BJ (cell line): ENCODE measurements at regions of chr9 and their contacts with region 1.

Region 1: DNA sequence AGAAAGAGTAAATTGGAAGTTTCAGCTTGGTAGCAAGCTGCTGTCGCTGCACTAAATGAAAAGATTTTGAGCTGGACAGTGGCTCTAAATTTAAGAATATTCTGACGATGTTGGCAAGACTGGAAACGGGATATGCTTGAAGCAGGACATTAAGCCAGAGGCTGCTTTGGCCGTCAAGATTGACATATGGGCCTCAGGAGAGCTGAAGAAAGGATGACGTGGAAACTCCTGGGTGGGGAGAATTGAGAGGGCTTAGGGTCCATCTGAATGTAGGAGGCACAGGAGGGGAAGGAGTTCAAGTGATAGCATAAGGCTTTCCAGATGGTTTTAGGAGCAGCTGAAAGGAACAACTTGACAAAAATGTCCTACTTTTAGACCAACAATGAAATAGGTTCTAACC is 108.9 kb downstream of the PAPPA start:
- DNase-seq: no peak
- H3K4me3 ChIP-seq: no peak overlapping the region
- H3K27me3 ChIP-seq: no peaks in the 10 kb centered on the region
- CTCF ChIP-seq: no peak

Region 2: DNA sequence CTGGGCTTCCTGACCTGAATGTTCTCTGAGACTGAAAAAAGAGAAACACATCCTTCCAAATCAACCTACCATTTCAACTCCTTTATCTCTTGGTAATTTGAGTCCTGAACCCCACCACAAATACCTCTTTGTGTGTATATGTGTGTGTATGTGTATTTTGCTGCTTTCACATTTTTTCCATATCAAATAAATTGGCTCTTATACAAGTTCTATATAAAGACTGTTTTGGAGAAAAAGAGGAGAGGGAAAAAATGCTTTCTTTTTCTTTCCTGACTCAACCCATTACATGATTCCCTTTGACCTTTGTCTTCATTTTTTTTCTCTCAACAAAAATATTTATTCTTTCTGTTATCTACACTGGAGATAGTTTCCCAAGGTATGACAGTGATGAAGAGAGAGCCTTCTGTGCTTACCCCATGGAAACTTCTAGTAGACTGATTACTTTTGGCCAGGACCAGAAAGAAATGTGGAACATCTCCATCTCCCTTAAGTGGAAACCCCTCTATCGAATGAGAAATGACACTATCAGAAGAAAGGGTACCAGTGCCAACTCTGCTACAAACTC is 23.6 kb before region 1 on chr9:
- CTCF ChIA-PET with region 1: no interaction called
- POLR2A ChIA-PET with region 1: no interaction called
- DNase-seq: no peak
- H3K4me3 ChIP-seq: no peak overlapping the region
- H3K27me3 ChIP-seq: no peaks in the 10 kb centered on the region
- CTCF ChIP-seq: no peak

Region 3: GRCh38 chr9:116250891-116251290 is 11.6 kb before region 1 on chr9:
- CTCF ChIA-PET with region 1: interaction called, 12 read pairs
- POLR2A ChIA-PET with region 1: no interaction called
- DNase-seq: no peak
- H3K4me3 ChIP-seq: no peak overlapping the region
- H3K27me3 ChIP-seq: no peaks in the 10 kb centered on the region
- CTCF ChIP-seq: no peak

Region 4: DNA sequence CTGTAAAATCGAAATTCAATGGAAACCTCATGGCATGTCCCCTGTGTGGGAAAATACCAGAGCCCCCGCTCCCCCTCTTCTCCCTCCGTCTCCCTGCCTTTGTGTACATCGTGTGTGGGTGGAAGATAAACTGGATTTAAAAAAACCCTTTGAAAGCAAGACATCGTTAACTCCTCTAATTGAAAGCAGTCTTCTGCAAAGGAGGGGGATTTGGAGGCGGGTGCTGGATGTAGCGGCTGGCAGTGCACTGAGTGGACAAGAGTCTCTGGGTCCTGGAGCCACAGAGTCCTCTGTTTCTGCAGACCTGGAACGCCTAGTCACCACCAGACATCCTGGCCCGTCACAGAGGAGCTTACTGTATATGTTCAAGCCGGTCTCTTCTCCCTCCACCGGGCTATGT is 60.6 kb after region 1 on chr9:
- CTCF ChIA-PET with region 1: no interaction called
- POLR2A ChIA-PET with region 1: no interaction called
- DNase-seq: no peak
- H3K4me3 ChIP-seq: no peak overlapping the region
- H3K27me3 ChIP-seq: no peaks in the 10 kb centered on the region
- CTCF ChIP-seq: no peak

Region 5: DNA sequence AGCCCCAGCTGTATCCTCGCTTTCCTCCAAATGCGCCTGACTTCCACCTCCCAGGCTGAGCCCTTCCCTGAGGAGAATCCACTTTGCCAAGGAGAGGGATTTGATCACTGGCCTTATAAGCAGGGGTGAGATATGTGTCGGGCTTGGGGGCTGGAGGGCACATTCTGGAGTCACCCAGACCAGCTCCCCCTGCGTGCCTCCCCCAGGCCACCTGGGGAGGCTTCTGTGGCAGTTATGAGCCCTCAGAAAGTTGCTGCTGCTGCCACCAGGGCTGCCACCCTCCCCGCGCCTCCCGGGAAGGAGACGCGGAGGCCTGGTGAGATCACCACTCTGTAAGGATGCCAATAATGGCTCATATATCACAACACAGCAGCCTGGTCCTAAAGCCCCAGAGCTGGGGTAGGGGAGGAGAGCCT is 102.6 kb after region 1 on chr9:
- CTCF ChIA-PET with region 1: no interaction called
- POLR2A ChIA-PET with region 1: no interaction called
- DNase-seq: no peak
- H3K4me3 ChIP-seq: no peak overlapping the region
- H3K27me3 ChIP-seq: no peaks in the 10 kb centered on the region
- CTCF ChIP-seq: peak; percentile 31; the same call in 1 of the 2 replicates